ENCODE measurements at regions of chr22 and their contacts with region 1.

Region 1: DNA sequence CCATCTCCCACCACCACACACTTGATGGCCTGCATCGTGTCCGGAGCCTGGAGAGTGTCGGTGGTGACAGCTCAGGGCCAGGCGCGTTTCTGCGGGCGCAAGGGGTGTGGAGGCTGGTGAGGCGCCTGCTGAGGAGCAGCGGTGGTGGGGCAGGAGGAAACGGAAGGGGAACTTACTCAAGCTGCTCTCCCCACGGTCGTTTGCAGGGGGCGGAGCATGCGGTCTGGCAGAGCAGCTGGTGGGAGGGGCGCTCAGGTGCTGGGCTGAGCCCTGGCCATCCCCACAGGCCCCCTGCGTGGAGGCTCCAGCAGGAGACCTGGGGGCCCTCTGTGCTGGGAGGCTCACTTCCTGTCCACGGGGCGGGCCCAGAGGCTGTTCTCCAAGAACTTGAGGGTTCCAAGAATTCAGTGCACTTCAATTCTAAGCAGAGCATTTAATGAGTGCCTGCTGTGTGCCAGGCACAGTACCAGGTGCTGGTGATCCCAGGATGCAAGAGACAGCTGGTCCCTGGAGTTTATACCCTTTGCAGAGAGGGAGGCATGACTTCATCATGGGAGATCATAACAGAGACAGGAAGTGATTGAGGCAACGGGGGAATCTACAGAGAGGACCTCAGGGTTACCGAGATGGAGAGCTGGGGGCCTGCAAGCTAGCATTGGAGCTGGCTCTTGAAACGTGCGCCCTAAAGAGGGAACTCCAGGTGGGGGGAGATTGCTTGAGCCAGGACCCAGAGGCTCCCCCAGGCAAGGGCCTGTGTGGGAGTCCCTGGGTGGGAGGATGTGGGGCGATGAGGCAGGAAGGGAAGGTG is at the start of gene RAC2:
- DNase-seq: peak; percentile 72 to 95 (median 88)
- ATAC-seq: peak; percentile 59
- H3K4me3 ChIP-seq: peak within 1 kb of the TSS; percentile 100
- H3K4me3 Mint-ChIP-seq: peak within 1 kb of the TSS; percentile 95
- H3K27ac ChIP-seq: peak within 1 kb of the TSS; percentile 85 to 96
- H3K27ac Mint-ChIP-seq: peak within 1 kb of the TSS; percentile 97
- H3K4me1 ChIP-seq: peaks cover 58% of the 10 kb centered on the region
- H3K4me1 Mint-ChIP-seq: peaks cover 58% of the 10 kb centered on the region
- H3K27me3 ChIP-seq: no peaks in the 10 kb centered on the region
- H3K27me3 Mint-ChIP-seq: no peaks in the 10 kb centered on the region
- CTCF ChIP-seq: no peak
- total RNA-seq, gene RAC2: 174 to 180 TPM

Region 2: GRCh38 chr22:37218771-37219411 is 25.4 kb before region 1 on chr22:
- CTCF ChIA-PET with region 1: interaction called, 5 read pairs
- POLR2A ChIA-PET with region 1: interaction called, 175 read pairs
- intact Hi-C with region 1: loop called in 1 of 2 experiments (anchors 1 kb)
- DNase-seq: peak; percentile 54 to 93 (median 74)
- ATAC-seq: peak; percentile 80
- H3K4me3 ChIP-seq: peak overlapping the region; percentile 49
- H3K4me3 Mint-ChIP-seq: peak overlapping the region; percentile 64
- H3K27ac ChIP-seq: peak overlapping the region; percentile 71 to 82
- H3K27ac Mint-ChIP-seq: peak overlapping the region; percentile 84
- H3K4me1 ChIP-seq: peaks cover 76% of the 10 kb centered on the region
- H3K4me1 Mint-ChIP-seq: peaks cover 93% of the 10 kb centered on the region
- H3K27me3 ChIP-seq: no peaks in the 10 kb centered on the region
- H3K27me3 Mint-ChIP-seq: no peaks in the 10 kb centered on the region
- CTCF ChIP-seq: no peak

Region 3: DNA sequence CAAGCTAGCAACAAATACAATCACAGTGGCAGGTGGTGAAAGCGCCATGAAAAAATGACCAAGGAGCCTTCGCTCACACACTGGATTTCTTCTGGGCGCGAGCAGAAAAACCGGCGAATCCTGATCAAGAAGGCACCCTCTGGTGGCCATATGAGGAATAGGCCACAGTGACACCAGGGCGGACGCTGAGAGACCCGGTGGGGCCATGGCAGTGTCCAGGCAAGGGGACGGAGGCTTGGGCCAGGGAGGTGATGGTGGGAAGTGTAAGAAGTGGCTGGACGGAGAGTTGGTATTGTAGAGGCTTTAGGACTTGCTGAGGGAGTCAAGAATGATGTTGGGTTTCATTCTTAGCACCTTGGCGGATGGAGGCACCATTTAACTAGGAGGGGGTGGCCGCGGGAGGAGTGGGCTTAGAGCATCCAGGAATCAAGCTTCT is 16.6 kb after region 1 on chr22:
- CTCF ChIA-PET with region 1: interaction called, 139 read pairs
- POLR2A ChIA-PET with region 1: interaction called, 57 read pairs
- intact Hi-C with region 1: loop called (anchors 1 kb)
- DNase-seq: peak in 13 of 14 experiments; percentile 49 to 81 (median 59)
- ATAC-seq: peak; percentile 80
- H3K4me3 ChIP-seq: no peak overlapping the region
- H3K4me3 Mint-ChIP-seq: no peak overlapping the region
- H3K27ac ChIP-seq: no peak overlapping the region
- H3K27ac Mint-ChIP-seq: peak overlapping the region; percentile 12
- H3K4me1 ChIP-seq: peaks cover 25% of the 10 kb centered on the region
- H3K4me1 Mint-ChIP-seq: peaks cover 24% of the 10 kb centered on the region
- H3K27me3 ChIP-seq: no peaks in the 10 kb centered on the region
- H3K27me3 Mint-ChIP-seq: no peaks in the 10 kb centered on the region
- CTCF ChIP-seq: peak; percentile 85

Region 4: GRCh38 chr22:37282385-37282677 is 38.0 kb after region 1 on chr22 and contains the start of gene CYTH4:
- CTCF ChIA-PET with region 1: interaction called, 4 read pairs
- POLR2A ChIA-PET with region 1: interaction called, 27 read pairs
- intact Hi-C with region 1: loop called in 1 of 2 experiments (anchors 2 kb)
- DNase-seq: peak; percentile 36 to 87 (median 76)
- ATAC-seq: peak; percentile 86
- H3K4me3 ChIP-seq: peak within 1 kb of the TSS; percentile 99
- H3K4me3 Mint-ChIP-seq: peak within 1 kb of the TSS; percentile 97
- H3K27ac ChIP-seq: peak within 1 kb of the TSS; percentile 78 to 90
- H3K27ac Mint-ChIP-seq: peak within 1 kb of the TSS; percentile 96
- H3K4me1 ChIP-seq: peaks cover 50% of the 10 kb centered on the region
- H3K4me1 Mint-ChIP-seq: peaks cover 61% of the 10 kb centered on the region
- H3K27me3 ChIP-seq: no peaks in the 10 kb centered on the region
- H3K27me3 Mint-ChIP-seq: no peaks in the 10 kb centered on the region
- CTCF ChIP-seq: no peak
- total RNA-seq, gene CYTH4: 134 to 138 TPM

Region 5: GRCh38 chr22:37316875-37317371 is 72.6 kb after region 1 on chr22:
- CTCF ChIA-PET with region 1: interaction called, 4 read pairs
- POLR2A ChIA-PET with region 1: interaction called, 12 read pairs
- intact Hi-C with region 1: no loop called
- DNase-seq: peak; percentile 45 to 86 (median 67)
- ATAC-seq: peak; percentile 82
- H3K4me3 ChIP-seq: no peak overlapping the region
- H3K4me3 Mint-ChIP-seq: no peak overlapping the region
- H3K27ac ChIP-seq: no peak overlapping the region
- H3K27ac Mint-ChIP-seq: peak overlapping the region; percentile 33
- H3K4me1 ChIP-seq: peaks cover 52% of the 10 kb centered on the region
- H3K4me1 Mint-ChIP-seq: peaks cover 39% of the 10 kb centered on the region
- H3K27me3 ChIP-seq: no peaks in the 10 kb centered on the region
- H3K27me3 Mint-ChIP-seq: no peaks in the 10 kb centered on the region
- CTCF ChIP-seq: peak; percentile 92

Region 6: DNA sequence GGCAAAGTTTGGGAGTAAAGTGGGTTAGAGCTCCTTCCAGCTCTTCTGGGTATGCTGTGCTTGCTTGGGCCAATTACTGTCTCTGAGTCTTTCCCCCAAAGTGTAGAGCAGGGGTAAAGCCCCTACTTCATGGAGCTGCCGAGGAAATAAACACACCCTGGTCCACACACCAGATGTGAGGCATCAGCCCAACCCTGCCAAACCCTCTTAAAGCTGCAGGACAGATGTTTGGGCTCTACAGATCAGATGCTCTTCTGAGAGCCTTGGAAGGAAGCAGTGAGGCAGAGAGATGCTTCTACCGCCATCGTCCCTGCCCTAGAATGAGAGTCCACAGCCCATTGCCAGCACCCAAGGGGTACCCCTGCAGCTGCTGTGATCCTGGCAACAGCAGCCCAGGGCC is 118.3 kb after region 1 on chr22:
- CTCF ChIA-PET with region 1: no interaction called
- POLR2A ChIA-PET with region 1: no interaction called
- intact Hi-C with region 1: no loop called
- DNase-seq: no peak
- ATAC-seq: no peak
- H3K4me3 ChIP-seq: no peak overlapping the region
- H3K4me3 Mint-ChIP-seq: no peak overlapping the region
- H3K27ac ChIP-seq: no peak overlapping the region
- H3K27ac Mint-ChIP-seq: no peak overlapping the region
- H3K4me1 ChIP-seq: no peaks in the 10 kb centered on the region
- H3K4me1 Mint-ChIP-seq: no peaks in the 10 kb centered on the region
- H3K27me3 ChIP-seq: no peaks in the 10 kb centered on the region
- H3K27me3 Mint-ChIP-seq: no peaks in the 10 kb centered on the region
- CTCF ChIP-seq: no peak

Measured in CD4-positive, alpha-beta T cell (primary cell).